B cell (primary cell): ENCODE measurements at regions of chr1 and their contacts with region 1.

Region 1: DNA sequence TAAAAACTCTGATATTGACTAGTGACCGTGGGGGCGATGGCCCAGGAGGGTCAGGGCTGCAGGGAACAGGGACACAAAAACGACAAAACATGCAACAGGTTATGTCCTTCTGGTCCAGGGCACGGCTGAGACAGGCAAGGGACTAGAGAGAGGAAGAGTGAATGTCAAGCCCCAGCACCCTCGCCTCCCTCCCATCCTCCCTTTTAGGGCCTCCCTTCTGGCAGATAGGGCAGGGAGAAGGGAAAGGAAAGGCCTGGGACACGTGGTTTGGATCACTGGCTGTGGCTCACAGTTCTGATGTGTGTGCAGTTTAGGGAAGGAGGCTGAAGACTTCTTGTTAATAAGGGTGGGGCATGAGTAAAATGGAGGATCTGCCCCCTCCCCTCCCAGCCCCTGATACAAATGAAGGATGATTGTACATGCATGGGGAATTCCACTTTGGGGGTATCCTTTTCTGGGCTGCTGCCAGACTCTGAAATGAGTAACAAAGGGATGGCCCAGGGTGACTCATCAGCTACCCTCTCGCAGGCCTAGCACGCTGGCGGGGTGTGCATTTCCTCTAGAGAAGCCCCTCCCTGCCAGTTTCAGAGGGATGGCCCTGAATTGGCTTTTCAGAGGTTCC is 14.2 kb downstream of the CAPN2 start:
- DNase-seq: peak; percentile 43
- ATAC-seq: peak; percentile 90
- H3K4me3 ChIP-seq: no peak overlapping the region
- H3K4me3 Mint-ChIP-seq: peak overlapping the region; percentile 33
- H3K27ac ChIP-seq: peak overlapping the region; percentile 11 to 37
- H3K27ac Mint-ChIP-seq: peak overlapping the region; percentile 69
- H3K4me1 ChIP-seq: peaks cover 8 to 21% of the 10 kb centered on the region in 2 donors
- H3K4me1 Mint-ChIP-seq: peaks cover 30% of the 10 kb centered on the region
- H3K27me3 ChIP-seq: no peaks in the 10 kb centered on the region
- H3K27me3 Mint-ChIP-seq: no peaks in the 10 kb centered on the region
- CTCF ChIP-seq: no peak

Region 2: GRCh38 chr1:223378754-223379153 is 347.7 kb before region 1 on chr1:
- CTCF ChIA-PET with region 1: no interaction called
- POLR2A ChIA-PET with region 1: no interaction called
- intact Hi-C with region 1: no loop called
- DNase-seq: no peak
- ATAC-seq: no peak
- H3K4me3 ChIP-seq: no peak overlapping the region
- H3K4me3 Mint-ChIP-seq: no peak overlapping the region
- H3K27ac ChIP-seq: no peak overlapping the region
- H3K27ac Mint-ChIP-seq: no peak overlapping the region
- H3K4me1 ChIP-seq: no peaks in the 10 kb centered on the region
- H3K4me1 Mint-ChIP-seq: no peaks in the 10 kb centered on the region
- H3K27me3 ChIP-seq: peaks cover 0 to 8% (median 0%) of the 10 kb centered on the region in 4 experiments
- H3K27me3 Mint-ChIP-seq: peaks cover 39% of the 10 kb centered on the region
- CTCF ChIP-seq: no peak

Region 3: DNA sequence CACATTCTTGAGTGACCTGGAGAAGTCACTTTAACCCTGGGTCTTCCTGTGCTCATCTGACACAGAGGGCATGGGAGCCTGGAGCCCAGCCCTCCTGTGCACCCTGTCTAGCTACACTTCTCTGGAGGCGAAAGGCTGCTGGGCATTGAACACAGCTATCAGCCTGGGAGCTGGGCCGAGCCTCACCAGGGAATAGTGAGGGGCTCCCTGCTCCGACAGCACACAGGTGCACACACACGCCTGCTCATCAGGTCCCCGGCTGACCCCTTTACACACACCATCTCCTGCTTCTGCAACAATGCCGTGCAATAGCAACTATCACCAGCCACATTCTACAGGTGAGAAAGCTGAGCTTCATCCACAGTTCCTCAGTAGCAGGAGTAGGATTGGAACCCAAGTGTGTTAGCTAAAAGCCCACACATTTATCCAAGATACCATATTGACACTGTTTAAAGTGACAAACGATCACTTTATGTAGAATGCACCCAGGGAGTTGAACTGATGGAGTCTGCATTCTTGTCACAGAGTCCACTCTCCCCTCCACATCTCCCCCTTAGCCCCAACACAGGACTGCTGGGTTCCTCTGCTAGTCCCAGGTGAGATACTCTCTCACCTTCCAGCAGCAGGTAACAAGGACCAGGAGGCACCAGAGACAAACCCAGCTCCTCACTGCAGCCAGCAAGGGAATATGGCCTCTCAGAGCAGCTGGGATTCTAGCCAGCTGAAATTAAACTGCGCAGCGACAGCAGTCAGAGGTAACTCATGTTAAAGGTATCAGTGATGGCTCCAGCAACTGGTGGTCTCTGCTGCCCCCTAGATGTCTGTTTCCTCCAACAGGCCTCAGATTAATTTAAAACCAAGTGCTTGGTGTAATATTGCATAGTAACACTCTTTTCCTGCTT is 42.7 kb before region 1 on chr1:
- CTCF ChIA-PET with region 1: no interaction called
- POLR2A ChIA-PET with region 1: no interaction called
- intact Hi-C with region 1: no loop called
- DNase-seq: peak; percentile 62
- ATAC-seq: no peak
- H3K4me3 ChIP-seq: no peak overlapping the region
- H3K4me3 Mint-ChIP-seq: no peak overlapping the region
- H3K27ac ChIP-seq: no peak overlapping the region
- H3K27ac Mint-ChIP-seq: no peak overlapping the region
- H3K4me1 ChIP-seq: no peaks in the 10 kb centered on the region
- H3K4me1 Mint-ChIP-seq: peaks cover 2% of the 10 kb centered on the region
- H3K27me3 ChIP-seq: peaks cover 0 to 11% (median 2%) of the 10 kb centered on the region in 4 experiments
- H3K27me3 Mint-ChIP-seq: peaks cover 30% of the 10 kb centered on the region
- CTCF ChIP-seq: peak; percentile 67

Region 4: GRCh38 chr1:224149713-224150112 is 423.2 kb after region 1 on chr1:
- CTCF ChIA-PET with region 1: no interaction called
- POLR2A ChIA-PET with region 1: interaction called, 10 read pairs
- intact Hi-C with region 1: no loop called
- DNase-seq: no peak
- ATAC-seq: no peak
- H3K4me3 ChIP-seq: no peak overlapping the region
- H3K4me3 Mint-ChIP-seq: no peak overlapping the region
- H3K27ac ChIP-seq: no peak overlapping the region
- H3K27ac Mint-ChIP-seq: no peak overlapping the region
- H3K4me1 ChIP-seq: peaks cover 13 to 20% of the 10 kb centered on the region in 2 donors
- H3K4me1 Mint-ChIP-seq: peaks cover 24% of the 10 kb centered on the region
- H3K27me3 ChIP-seq: no peaks in the 10 kb centered on the region
- H3K27me3 Mint-ChIP-seq: no peaks in the 10 kb centered on the region
- CTCF ChIP-seq: no peak